CD4-positive, alpha-beta T cell (primary cell): ENCODE measurements at regions of chr2 and their contacts with region 1.

Region 1: GRCh38 chr2:174771631-174772471 is 7.6 kb upstream of the CHRNA1 start:
- DNase-seq: peak in 10 of 14 experiments; percentile 17 to 64 (median 31)
- ATAC-seq: peak; percentile 66
- H3K4me3 ChIP-seq: no peak overlapping the region
- H3K4me3 Mint-ChIP-seq: no peak overlapping the region
- H3K27ac ChIP-seq: no peak overlapping the region
- H3K27ac Mint-ChIP-seq: no peak overlapping the region
- H3K4me1 ChIP-seq: peaks cover 15% of the 10 kb centered on the region
- H3K4me1 Mint-ChIP-seq: peaks cover 26% of the 10 kb centered on the region
- H3K27me3 ChIP-seq: no peaks in the 10 kb centered on the region
- H3K27me3 Mint-ChIP-seq: no peaks in the 10 kb centered on the region
- CTCF ChIP-seq: peak; percentile 35

Region 2: DNA sequence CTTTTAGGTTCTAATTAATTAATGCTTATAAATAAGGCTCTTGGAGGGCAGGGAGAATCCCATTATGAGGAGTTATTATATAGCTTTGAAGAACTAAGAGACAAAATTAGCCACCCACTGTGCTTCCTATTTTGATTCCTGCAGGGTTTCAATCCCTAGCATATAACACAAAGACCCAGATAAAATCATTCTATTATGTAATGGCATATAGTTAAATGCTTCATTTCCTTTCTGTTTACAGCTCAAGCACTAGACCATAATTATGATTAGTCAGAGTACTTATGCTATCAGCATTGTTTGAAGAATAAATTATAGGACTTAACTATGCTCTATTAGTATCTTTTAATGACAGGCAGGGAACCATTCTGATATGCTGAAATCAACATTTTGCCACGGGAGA is 294.1 kb before region 1 on chr2:
- CTCF ChIA-PET with region 1: no interaction called
- POLR2A ChIA-PET with region 1: no interaction called
- intact Hi-C with region 1: no loop called
- DNase-seq: no peak
- ATAC-seq: no peak
- H3K4me3 ChIP-seq: no peak overlapping the region
- H3K4me3 Mint-ChIP-seq: no peak overlapping the region
- H3K27ac ChIP-seq: no peak overlapping the region
- H3K27ac Mint-ChIP-seq: no peak overlapping the region
- H3K4me1 ChIP-seq: no peaks in the 10 kb centered on the region
- H3K4me1 Mint-ChIP-seq: peaks cover 13% of the 10 kb centered on the region
- H3K27me3 ChIP-seq: no peaks in the 10 kb centered on the region
- H3K27me3 Mint-ChIP-seq: no peaks in the 10 kb centered on the region
- CTCF ChIP-seq: no peak

Region 3: GRCh38 chr2:174908284-174908683 is 136.4 kb after region 1 on chr2:
- CTCF ChIA-PET with region 1: no interaction called
- POLR2A ChIA-PET with region 1: no interaction called
- intact Hi-C with region 1: loop called in 1 of 2 experiments (anchors 5 kb)
- DNase-seq: no peak
- ATAC-seq: no peak
- H3K4me3 ChIP-seq: no peak overlapping the region
- H3K4me3 Mint-ChIP-seq: no peak overlapping the region
- H3K27ac ChIP-seq: no peak overlapping the region
- H3K27ac Mint-ChIP-seq: no peak overlapping the region
- H3K4me1 ChIP-seq: no peaks in the 10 kb centered on the region
- H3K4me1 Mint-ChIP-seq: peaks cover 9% of the 10 kb centered on the region
- H3K27me3 ChIP-seq: peaks cover 0 to 4% of the 10 kb centered on the region in 2 experiments
- H3K27me3 Mint-ChIP-seq: no peaks in the 10 kb centered on the region
- CTCF ChIP-seq: no peak

Region 4: GRCh38 chr2:174985630-174986029 is 213.8 kb after region 1 on chr2:
- CTCF ChIA-PET with region 1: interaction called, 7 read pairs
- POLR2A ChIA-PET with region 1: no interaction called
- intact Hi-C with region 1: loop called in 1 of 2 experiments (anchors 5 kb)
- DNase-seq: no peak
- ATAC-seq: no peak
- H3K4me3 ChIP-seq: no peak overlapping the region
- H3K4me3 Mint-ChIP-seq: no peak overlapping the region
- H3K27ac ChIP-seq: no peak overlapping the region
- H3K27ac Mint-ChIP-seq: no peak overlapping the region
- H3K4me1 ChIP-seq: peaks cover 4% of the 10 kb centered on the region
- H3K4me1 Mint-ChIP-seq: no peaks in the 10 kb centered on the region
- H3K27me3 ChIP-seq: no peaks in the 10 kb centered on the region
- H3K27me3 Mint-ChIP-seq: peaks cover 8% of the 10 kb centered on the region
- CTCF ChIP-seq: peak; percentile 39

Region 5: DNA sequence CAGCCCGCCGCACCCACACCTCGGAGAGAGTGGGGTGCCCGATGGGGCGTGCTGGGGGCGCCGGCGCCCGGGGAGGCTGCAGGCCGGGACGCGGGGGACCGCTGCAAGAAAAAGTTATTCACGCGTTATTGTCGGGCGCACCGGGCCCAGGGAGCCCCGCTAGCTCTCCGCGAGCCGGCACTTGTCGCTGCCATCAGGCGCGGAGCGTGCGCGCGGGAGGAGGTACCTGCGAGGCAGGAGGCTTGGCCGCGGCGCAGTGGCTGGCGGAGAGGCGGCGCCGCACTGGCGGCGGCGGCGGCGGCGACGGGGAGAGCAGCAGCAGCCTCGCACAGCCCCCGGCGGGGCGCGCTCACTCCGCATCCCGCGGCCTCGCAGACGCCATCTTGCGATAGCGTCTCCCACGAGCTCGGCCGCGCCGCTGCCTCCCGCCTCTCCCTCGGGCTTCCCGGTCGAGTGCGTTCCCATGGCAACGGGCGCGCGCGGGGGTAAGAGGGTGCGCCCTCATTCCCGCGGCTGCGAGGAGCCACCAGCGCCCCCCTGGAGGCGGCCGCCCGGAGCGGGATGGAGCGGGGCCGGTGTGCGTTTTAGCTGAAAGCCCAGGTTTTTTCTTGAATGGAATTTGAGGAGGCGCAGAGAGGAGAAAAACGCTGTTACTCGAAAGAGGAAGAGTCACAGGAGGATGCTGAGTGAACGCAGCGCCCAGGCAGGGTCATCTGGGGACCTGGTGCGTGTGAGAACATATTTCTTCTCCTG is 233.3 kb after region 1 on chr2 and contains the start of gene CHN1:
- CTCF ChIA-PET with region 1: no interaction called
- POLR2A ChIA-PET with region 1: no interaction called
- intact Hi-C with region 1: loop called in 1 of 2 experiments (anchors 10 kb)
- DNase-seq: peak; percentile 44 to 87 (median 62)
- ATAC-seq: peak; percentile 96
- H3K4me3 ChIP-seq: peak within 1 kb of the TSS; percentile 54
- H3K4me3 Mint-ChIP-seq: peak within 1 kb of the TSS; percentile 91
- H3K27ac ChIP-seq: no peak within 1 kb of the TSS
- H3K27ac Mint-ChIP-seq: no peak within 1 kb of the TSS
- H3K4me1 ChIP-seq: peaks cover 11% of the 10 kb centered on the region
- H3K4me1 Mint-ChIP-seq: peaks cover 12% of the 10 kb centered on the region
- H3K27me3 ChIP-seq: peaks cover 12 to 45% of the 10 kb centered on the region in 2 experiments
- H3K27me3 Mint-ChIP-seq: peaks cover 70% of the 10 kb centered on the region
- CTCF ChIP-seq: no peak
- total RNA-seq, gene CHN1: 5.3 to 5.6 TPM